ENCODE measurements at regions of chr17 and their contacts with region 1.

Region 1: GRCh38 chr17:4948931-4949320 is 596 bp upstream of the PFN1 start:
- DNase-seq: peak; percentile 85
- H3K4me3 Mint-ChIP-seq: peak overlapping the region; percentile 90
- H3K27ac Mint-ChIP-seq: peak overlapping the region; percentile 95
- H3K4me1 Mint-ChIP-seq: peaks cover 41% of the 10 kb centered on the region
- H3K27me3 Mint-ChIP-seq: no peaks in the 10 kb centered on the region

Region 2: DNA sequence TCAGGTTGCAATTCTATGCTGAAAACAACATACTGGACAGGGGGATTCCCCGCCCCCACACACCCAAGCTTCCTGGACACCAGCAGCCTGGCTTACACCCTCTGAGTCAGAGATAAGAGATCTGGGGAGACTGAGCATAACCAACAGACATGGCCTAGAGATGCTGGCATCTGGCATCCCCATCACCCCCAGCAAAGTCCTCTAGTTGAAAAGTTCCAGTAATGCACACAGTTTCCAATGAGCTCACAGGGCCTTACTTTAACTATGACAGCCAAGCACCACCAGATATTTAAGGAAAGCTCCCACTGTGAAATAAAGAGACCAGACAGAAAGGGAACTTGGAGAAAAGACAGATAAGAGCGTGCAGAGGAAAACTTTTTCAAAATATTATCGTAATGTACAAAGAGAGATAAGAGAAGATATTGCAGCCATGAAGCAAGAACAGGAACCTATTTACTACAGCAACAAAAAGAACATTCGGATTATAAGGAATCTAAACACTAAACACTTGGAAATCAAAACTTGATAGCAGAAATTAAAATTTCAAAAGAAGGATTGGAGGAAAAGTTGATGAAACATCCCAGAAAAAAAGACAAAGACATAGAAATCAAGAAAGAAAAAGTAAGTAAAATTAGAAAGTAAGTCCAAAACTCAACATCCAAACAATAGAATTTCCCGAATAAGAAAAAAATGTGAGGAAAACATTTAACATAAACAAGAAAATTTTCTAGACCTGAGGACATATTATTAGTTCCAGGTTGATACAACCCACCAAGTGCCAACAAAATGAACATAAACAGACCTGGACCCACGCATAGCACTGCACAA is 290.2 kb before region 1 on chr17:
- CTCF ChIA-PET with region 1: no interaction called
- POLR2A ChIA-PET with region 1: no interaction called
- intact Hi-C with region 1: no loop called
- DNase-seq: peak; percentile 83
- H3K4me3 Mint-ChIP-seq: no peak overlapping the region
- H3K27ac Mint-ChIP-seq: no peak overlapping the region
- H3K4me1 Mint-ChIP-seq: peaks cover 12% of the 10 kb centered on the region
- H3K27me3 Mint-ChIP-seq: peaks cover 11% of the 10 kb centered on the region

Region 3: DNA sequence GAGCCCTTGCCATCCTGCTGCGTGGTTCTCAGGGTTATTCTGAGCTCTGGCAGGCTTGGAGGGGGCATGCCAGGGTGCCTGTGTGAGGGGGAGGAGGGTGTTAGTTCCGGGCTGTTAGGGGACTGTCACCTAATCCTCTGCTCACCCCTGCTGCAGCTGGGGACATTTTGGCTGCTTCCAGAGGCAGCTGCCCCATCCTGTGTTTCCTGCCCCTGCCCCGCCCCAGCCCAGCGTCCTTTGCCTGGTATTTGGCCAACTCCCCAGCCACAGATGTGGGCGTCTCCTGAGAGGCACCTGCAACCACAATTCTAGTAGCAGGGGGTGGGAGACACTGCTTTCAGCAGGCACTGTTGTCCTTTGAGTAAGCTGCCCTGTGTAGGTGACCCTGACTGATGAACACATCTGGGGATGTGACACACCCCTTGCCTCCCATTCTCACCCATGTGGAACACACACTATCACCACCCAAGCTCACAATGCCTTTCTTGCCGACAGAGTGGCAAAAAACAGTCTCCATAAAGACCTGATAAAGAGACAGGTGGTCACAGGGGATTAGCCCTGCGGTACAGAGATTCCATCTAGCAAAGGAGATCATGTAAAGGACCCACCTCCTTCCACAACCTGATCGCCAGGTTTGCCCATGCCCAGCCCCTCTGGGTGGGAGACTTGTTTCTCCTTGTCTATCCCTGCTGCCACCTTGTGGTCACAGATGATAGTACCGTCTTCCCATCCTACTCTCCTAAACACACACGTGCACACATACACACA is 45.7 kb before region 1 on chr17 and contains the start of gene CHRNE:
- CTCF ChIA-PET with region 1: no interaction called
- POLR2A ChIA-PET with region 1: interaction called, 13 read pairs
- intact Hi-C with region 1: no loop called
- DNase-seq: peak; percentile 84
- H3K4me3 Mint-ChIP-seq: peak within 1 kb of the TSS; percentile 8
- H3K27ac Mint-ChIP-seq: peak within 1 kb of the TSS; percentile 39
- H3K4me1 Mint-ChIP-seq: peaks cover 36% of the 10 kb centered on the region
- H3K27me3 Mint-ChIP-seq: peaks cover 1% of the 10 kb centered on the region
- total RNA-seq, gene CHRNE: 0.45 to 0.56 TPM

Region 4: DNA sequence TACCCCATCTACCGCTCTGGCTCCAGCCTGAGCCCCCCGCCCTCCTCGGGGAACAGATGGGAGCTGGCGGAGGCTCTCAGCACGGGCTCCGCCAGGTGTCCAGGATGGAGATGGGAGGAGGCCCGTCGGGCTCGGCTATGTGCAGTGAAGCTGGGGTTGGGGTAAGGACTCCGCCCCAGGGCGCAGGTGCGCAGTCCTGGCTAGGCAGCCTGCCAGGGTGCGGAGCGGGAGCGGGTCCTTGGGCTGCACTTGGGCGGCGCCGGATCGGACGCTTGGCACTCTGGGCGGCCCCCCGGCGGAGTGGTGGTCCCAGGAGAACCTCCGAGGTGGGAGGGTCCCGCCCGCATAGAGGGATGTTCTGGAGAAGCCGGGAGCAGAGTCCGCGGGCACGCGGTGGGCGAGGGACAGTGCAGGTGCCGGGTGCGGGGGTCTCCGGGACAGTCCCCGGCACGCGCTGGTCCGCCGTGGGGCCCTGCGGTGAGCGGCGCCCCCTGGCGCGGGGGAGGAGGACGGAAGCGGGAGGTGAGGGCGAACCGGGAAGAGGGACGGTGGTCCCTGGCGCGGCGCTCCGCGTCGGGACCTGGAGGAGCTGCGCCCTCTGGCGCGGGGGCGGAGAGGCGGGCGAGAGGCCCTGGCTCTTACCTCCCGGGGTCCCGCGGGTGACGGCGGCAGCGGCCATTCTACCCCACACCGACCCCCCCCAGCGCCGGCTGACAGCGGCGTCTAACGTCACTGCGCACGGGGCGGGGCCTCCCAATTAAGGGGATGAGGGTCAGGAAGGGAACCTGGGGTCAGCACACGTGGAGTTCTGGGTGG is 38.2 kb after region 1 on chr17 and contains the start of gene CAMTA2:
- CTCF ChIA-PET with region 1: no interaction called
- POLR2A ChIA-PET with region 1: interaction called, 10 read pairs
- intact Hi-C with region 1: loop called (anchors 5 kb)
- DNase-seq: peak; percentile 90
- H3K4me3 Mint-ChIP-seq: peak within 1 kb of the TSS; percentile 91
- H3K27ac Mint-ChIP-seq: peak within 1 kb of the TSS; percentile 94
- H3K4me1 Mint-ChIP-seq: peaks cover 42% of the 10 kb centered on the region
- H3K27me3 Mint-ChIP-seq: no peaks in the 10 kb centered on the region
- total RNA-seq, gene CAMTA2: 101 to 109 TPM

Region 5: DNA sequence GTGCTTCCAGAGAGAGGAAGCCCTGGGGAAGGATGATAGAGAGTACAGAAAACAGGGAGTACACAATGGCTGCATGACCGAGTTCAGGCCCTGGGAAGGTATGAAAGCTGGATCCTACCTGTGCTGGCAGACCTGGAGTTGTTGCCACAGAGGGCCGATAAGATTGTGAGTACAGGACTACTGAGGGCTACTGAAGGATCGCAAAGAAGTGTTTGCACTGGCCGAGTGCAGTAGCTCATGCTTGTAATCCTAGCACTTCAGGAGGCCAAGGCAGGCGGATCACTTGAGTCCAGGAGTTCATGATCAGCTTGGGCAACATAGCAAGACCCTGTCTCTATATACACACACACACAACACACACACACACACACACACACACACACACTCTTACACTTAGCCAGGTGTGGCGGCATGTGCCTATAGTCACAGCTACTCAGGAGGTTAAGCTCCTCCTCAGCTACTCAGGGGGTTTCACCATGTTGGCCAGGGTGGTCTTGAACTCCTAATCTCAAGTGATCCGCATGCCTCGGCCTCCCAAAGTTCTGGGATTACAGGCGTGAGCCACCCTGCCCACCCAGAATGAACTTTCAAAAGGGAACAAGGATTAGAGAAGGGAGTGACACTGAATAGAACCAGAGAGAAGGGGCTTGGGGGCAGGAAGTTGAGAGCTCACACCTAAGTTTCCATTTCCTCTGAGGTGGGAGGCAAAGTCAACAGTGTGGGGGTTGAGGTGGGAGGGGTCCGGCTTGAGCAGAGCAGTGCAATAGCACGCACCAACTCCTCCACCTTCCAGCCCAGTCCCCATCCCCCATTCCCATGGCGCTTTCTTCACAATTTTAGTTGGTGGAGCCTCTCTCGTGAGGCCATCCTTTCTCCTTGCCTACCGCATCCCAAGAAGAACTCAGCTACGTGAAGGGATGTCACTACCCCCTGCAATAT is 278.3 kb after region 1 on chr17:
- CTCF ChIA-PET with region 1: no interaction called
- POLR2A ChIA-PET with region 1: no interaction called
- intact Hi-C with region 1: no loop called
- DNase-seq: peak; percentile 18
- H3K4me3 Mint-ChIP-seq: no peak overlapping the region
- H3K27ac Mint-ChIP-seq: no peak overlapping the region
- H3K4me1 Mint-ChIP-seq: peaks cover 18% of the 10 kb centered on the region
- H3K27me3 Mint-ChIP-seq: no peaks in the 10 kb centered on the region

Region 6: DNA sequence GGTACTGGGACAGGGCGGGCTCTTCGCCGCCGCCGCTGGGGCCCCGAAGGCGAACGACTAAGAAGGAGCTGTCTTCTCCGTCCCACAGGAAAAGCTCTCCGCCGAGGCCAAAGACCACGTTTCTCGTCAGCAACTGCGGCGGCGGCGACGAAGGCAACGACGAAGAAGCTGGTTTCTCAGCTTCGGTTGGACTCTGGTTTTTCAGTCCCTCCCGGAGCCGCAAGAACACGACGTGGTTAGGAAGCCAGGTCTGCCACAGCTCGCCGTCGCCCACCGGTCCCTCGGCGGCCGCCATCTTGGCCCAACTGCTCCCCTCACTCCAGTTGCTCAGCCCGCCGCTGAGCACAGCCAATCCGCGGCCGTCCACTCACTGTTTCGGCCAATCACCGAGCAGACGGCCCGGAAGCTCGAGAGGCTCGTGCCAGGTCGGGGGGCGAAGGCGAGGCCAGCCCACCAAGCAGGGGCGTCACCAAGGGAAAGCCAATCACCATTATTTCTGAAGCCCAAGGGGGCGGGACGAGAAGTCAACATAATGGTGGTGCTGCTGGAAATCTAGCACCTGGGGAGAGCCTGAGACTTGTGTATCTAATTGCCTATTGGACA is 470.5 kb after region 1 on chr17 and contains the start of gene NUP88:
- CTCF ChIA-PET with region 1: no interaction called
- POLR2A ChIA-PET with region 1: no interaction called
- intact Hi-C with region 1: loop called (anchors 5 kb)
- DNase-seq: peak; percentile 98
- H3K4me3 Mint-ChIP-seq: peak within 1 kb of the TSS; percentile 99
- H3K27ac Mint-ChIP-seq: peak within 1 kb of the TSS; percentile 98
- H3K4me1 Mint-ChIP-seq: peaks cover 50% of the 10 kb centered on the region
- H3K27me3 Mint-ChIP-seq: no peaks in the 10 kb centered on the region
- total RNA-seq, gene NUP88: 110 to 113 TPM

Measured in activated CD4-positive, alpha-beta memory T cell treated with anti-CD3 and anti-CD28 coated beads for 36 hours (primary cell).